ENCODE measurements at regions of chr17 and their contacts with region 1.

Region 1: DNA sequence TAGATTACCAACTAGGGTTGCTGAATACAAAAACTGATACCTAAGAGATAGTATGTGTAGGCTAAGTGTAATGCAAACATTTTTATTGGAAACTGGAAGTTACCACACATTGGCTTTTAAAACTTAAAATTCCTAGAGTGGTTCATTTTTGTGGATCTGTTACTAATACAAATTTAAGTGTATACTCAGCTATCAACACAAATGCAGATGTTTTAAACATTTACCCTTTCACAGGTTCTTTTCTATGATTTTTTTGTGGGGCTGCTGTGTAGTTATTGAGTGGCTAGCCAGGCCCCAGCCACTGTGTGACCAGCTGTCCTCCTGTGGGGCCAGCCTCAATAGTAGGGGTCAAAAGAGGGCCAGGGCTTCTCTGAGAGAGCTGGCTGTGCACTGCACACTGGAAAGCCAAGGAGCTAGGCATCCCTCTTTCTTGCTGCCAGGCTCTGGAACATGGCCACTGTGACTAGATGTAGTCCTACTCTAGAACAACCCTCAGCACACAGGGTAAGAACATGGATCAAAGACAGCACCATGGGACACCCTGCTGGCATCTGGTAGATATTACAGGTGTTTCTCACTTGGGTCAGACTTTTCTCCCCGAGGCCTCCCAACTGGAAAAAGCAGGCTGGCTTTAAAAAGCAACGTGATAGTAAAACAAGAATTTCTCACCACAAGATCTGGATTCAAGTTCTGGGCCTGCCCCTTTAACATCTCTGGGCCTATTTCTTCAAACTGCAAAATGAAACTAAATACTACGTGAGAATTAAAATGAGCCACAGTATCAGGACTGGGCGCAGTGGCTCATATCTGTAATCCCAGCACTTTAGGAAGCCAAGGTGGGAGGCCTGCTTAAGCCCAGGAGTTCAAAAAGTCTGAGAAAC is 7.3 kb upstream of the VEZF1 start:
- DNase-seq: peak in 2 of 3 donors; percentile 81 to 84
- H3K4me3 ChIP-seq: no peak overlapping the region
- H3K27ac ChIP-seq: no peak overlapping the region
- H3K4me1 ChIP-seq: peaks cover 11 to 35% (median 22%) of the 10 kb centered on the region in 4 experiments
- H3K27me3 ChIP-seq: no peaks in the 10 kb centered on the region

Region 2: DNA sequence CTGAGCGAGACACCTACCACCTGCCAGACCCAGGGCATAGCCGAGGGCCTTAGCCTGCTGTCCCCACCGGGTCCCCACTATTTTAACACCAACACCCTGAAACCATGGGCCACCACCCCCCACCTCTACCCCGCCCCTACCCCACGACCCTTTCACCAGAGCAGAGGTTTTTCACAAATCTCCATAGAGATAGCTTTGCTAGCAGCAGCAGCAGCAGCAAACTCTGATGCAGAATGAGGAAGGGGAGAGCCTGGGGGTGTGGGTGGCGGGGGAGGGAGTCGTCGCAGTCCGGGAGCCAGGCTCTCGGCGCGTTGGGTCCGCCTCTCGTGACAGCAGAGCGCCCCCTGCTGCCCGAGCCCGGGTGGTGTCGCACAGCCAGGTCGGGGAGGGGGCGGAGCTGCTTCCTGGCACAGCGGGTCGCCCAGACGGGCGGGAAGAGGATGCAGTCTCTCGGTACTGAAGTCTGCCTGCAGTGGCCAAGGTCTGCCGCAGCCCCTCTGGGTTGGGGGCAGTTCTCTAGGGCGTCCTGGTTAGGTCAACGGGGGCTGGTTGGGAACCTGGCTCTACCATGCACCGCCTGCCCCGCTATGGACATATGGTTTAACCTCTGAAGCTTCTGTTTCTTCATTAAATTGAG is 212.1 kb before region 1 on chr17:
- CTCF ChIA-PET with region 1: interaction called, 10 read pairs
- POLR2A ChIA-PET with region 1: no interaction called
- DNase-seq: peak; percentile 80 to 90 (median 90)
- H3K4me3 ChIP-seq: peak overlapping the region in 3 of 7 experiments; percentile 2 to 60 (median 2)
- H3K27ac ChIP-seq: no peak overlapping the region
- H3K4me1 ChIP-seq: peaks cover 0 to 28% (median 21%) of the 10 kb centered on the region in 4 experiments
- H3K27me3 ChIP-seq: peaks cover 0 to 2% (median 0%) of the 10 kb centered on the region in 5 experiments

Region 3: GRCh38 chr17:57849874-57850754 is 145.2 kb before region 1 on chr17 and contains the start of gene MRPS23:
- CTCF ChIA-PET with region 1: interaction called, 443 read pairs
- POLR2A ChIA-PET with region 1: interaction called, 4 read pairs
- DNase-seq: peak; percentile 99 to 100 (median 99)
- H3K4me3 ChIP-seq: peak within 1 kb of the TSS; percentile 47 to 96 (median 87)
- H3K27ac ChIP-seq: peak within 1 kb of the TSS; percentile 80 to 92
- H3K4me1 ChIP-seq: peaks cover 14 to 50% (median 36%) of the 10 kb centered on the region in 4 experiments
- H3K27me3 ChIP-seq: no peaks in the 10 kb centered on the region

Region 4: DNA sequence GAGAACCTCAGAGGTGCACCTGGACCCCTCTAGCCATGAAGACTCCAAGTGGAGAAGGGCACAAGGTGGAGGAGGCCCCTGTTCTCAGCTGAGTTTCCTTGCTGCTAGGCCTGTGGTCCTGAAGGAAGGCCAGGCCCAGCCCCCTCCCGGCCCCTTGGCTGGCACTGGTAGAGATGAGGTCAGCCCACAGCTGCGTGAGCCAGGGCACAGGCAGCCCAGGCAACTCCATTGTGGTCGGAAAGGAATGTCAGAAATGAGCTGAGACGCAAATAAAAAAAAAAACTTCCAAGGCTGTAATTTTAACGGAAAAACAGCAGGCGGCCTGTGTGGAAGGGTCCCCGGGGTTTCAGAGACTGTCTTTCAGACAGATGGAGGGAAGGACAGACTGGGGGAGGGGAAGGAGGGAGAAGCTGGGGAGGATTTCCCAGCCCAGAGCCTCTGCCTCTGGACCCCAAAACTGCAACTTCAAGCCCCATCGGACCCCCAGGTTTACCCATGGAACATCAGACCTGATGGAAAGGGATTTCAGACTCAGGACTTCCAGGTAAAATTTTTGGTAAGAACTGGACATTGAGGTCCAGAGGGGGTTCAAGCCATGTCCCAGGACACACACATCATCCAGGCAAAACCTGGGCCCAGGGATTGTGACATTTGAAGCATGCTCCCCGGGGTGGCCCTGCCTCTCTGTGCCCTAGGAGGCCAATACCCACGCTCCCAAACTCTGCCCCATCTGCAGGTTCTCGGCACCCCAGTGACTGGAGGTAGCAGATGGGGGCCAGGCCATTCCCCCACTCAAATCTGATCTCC is 119.8 kb before region 1 on chr17:
- CTCF ChIA-PET with region 1: interaction called, 29 read pairs
- POLR2A ChIA-PET with region 1: interaction called, 4 read pairs
- DNase-seq: peak; percentile 69 to 79 (median 74)
- H3K4me3 ChIP-seq: peak overlapping the region in 3 of 7 experiments; percentile 29 to 45 (median 29)
- H3K27ac ChIP-seq: no peak overlapping the region
- H3K4me1 ChIP-seq: peaks cover 8 to 77% (median 65%) of the 10 kb centered on the region in 4 experiments
- H3K27me3 ChIP-seq: no peaks in the 10 kb centered on the region

Region 5: GRCh38 chr17:57982452-57983170 is 12.7 kb before region 1 on chr17:
- CTCF ChIA-PET with region 1: interaction called, 14 read pairs
- POLR2A ChIA-PET with region 1: no interaction called
- DNase-seq: no peak
- H3K4me3 ChIP-seq: no peak overlapping the region
- H3K27ac ChIP-seq: no peak overlapping the region
- H3K4me1 ChIP-seq: peaks cover 13 to 34% (median 21%) of the 10 kb centered on the region in 4 experiments
- H3K27me3 ChIP-seq: no peaks in the 10 kb centered on the region

Region 6: GRCh38 chr17:58043221-58044181 is 48.2 kb after region 1 on chr17:
- CTCF ChIA-PET with region 1: no interaction called
- POLR2A ChIA-PET with region 1: no interaction called
- DNase-seq: no peak
- H3K4me3 ChIP-seq: no peak overlapping the region
- H3K27ac ChIP-seq: no peak overlapping the region
- H3K4me1 ChIP-seq: no peaks in the 10 kb centered on the region
- H3K27me3 ChIP-seq: peaks cover 0 to 11% (median 0%) of the 10 kb centered on the region in 5 experiments

Region 7: DNA sequence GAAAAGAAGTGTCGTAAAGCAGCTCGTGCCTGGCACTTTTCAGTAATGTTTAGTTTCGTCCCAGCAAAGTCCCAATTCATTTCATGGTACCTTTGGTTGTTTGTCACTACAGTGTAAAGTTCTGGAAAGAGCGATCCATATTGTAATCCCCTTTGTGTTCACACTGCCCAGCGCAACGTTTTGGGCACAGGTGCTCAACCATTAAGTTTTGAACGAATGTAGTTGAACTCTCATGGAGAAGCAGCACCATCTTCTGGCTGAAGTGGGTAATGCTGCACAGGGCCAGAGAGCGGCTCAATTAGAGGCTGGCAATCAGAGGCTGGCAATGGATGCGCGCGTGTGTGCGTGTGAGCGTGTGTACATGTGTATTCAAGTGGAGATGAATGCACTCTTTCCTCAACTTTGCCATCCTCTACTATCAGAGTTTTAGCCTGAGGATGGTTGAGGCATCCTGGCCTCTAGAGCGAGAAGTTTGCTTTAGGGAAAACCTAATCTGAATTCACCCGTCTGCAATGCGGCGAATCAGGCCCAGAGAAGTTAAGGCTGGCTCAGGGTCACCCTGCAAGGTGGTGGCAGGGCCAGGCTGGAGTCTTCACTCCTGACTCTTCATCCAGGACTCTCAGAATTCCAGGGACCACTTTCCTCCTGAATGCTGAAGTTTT is 117.8 kb after region 1 on chr17:
- CTCF ChIA-PET with region 1: interaction called, 12 read pairs
- POLR2A ChIA-PET with region 1: no interaction called
- DNase-seq: peak; percentile 75 to 87 (median 81)
- H3K4me3 ChIP-seq: no peak overlapping the region
- H3K27ac ChIP-seq: no peak overlapping the region
- H3K4me1 ChIP-seq: no peaks in the 10 kb centered on the region
- H3K27me3 ChIP-seq: peaks cover 0 to 21% (median 0%) of the 10 kb centered on the region in 5 experiments

Region 8: GRCh38 chr17:58156839-58157803 is 161.8 kb after region 1 on chr17:
- CTCF ChIA-PET with region 1: no interaction called
- POLR2A ChIA-PET with region 1: no interaction called
- DNase-seq: peak; percentile 49 to 79 (median 71)
- H3K4me3 ChIP-seq: peak overlapping the region; percentile 50 to 81 (median 62)
- H3K27ac ChIP-seq: peak overlapping the region in 1 of 2 experiments; percentile 30
- H3K4me1 ChIP-seq: peaks cover 5 to 34% (median 29%) of the 10 kb centered on the region in 4 experiments
- H3K27me3 ChIP-seq: no peaks in the 10 kb centered on the region

Measured in common myeloid progenitor, CD34-positive (primary cell).